ACHN (cell line): ENCODE measurements at regions of chr1 and their contacts with region 1.

Region 1: GRCh38 chr1:85307987-85308832 is 31.8 kb upstream of the BCL10 start:
- DNase-seq: peak; percentile 89

Region 2: GRCh38 chr1:85550784-85551516 is 242.7 kb after region 1 on chr1:
- in situ Hi-C with region 1: loop called (anchors 25 kb)
- DNase-seq: peak; percentile 33

Region 3: GRCh38 chr1:85707990-85708828 is 400.0 kb after region 1 on chr1 and contains the start of gene ZNHIT6:
- in situ Hi-C with region 1: loop called (anchors 25 kb)
- DNase-seq: peak; percentile 97